HepG2 (cell line): ENCODE measurements at regions of chr7 and their contacts with region 1.

Region 1: DNA sequence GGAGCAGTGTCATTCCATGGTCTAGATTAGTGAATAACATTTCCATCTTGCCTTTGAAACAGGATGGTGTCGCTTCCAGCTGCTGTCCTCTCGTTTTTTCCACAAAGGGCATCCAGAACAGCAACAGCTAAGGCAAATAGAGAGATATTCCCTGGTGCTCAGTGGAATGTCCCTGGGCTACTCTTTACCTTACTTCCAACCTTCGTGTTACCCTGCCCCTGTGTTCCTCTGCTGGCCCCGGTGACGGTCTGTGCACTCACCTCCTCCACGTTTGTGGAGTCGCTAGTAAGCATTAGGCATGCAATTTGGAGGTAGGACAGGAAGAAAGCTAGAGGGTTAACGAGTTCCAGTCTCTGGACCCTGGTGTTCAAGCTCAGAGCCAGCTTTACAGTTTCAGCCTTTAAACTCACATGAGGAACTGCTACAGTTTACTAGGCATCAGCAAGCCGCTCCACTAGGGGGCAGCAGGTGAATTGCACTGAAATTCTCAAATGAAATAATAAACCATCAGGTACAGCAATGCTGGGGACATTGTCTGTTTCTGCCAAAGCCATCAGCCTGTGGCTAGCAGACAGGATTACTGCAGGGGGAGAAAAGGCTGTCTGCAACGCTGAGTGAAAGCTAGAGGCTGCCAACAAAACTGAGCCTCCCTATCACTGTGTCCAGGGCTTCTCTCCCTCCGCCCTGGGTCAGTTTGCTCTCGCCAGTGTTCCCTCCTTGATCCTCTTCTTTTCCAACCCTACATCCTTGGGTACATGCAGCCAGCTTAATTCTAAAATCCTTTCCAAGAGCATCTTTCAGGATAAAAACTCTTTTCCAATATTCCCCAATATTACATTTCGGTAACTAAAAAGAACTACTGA is 9.0 kb downstream of the MRPL32 start:
- DNase-seq: peak; percentile 56
- ATAC-seq: peak; percentile 93
- H3K4me3 ChIP-seq: no peak overlapping the region
- H3K27ac ChIP-seq: no peak overlapping the region
- H3K4me1 ChIP-seq: no peaks in the 10 kb centered on the region
- H3K27me3 ChIP-seq: no peaks in the 10 kb centered on the region
- CTCF ChIP-seq: peak; percentile 88
- EP300 ChIP-seq: no peak
- POLR2A ChIP-seq: no peak
- RAD21 ChIP-seq: peak; percentile 60; the same call in 1 of the 2 replicates

Region 2: DNA sequence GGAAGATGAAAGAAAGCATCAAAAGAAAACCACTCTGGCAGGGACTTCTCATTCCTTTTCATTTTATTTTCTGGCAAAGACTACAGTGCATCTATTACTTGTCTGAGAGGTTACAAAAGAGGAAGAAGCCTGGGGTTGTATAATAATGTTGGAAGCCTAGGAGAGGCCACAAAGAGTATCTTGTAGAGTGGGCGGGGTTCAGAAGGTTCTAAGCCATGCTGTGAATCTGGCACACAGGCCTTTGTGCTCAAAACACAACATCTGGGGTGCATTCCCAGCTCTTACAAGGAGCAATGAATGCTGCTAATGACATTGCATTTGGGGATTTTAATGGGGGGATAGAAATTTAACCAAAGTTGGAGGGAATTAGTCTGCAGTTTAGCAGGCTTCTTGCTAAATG is 40.4 kb after region 1 on chr7:
- CTCF ChIA-PET with region 1: no interaction called
- POLR2A ChIA-PET with region 1: no interaction called
- in situ Hi-C with region 1: no loop called
- intact Hi-C with region 1: no loop called
- DNase-seq: no peak
- ATAC-seq: no peak
- H3K4me3 ChIP-seq: no peak overlapping the region
- H3K27ac ChIP-seq: no peak overlapping the region
- H3K4me1 ChIP-seq: peaks cover 22% of the 10 kb centered on the region
- H3K27me3 ChIP-seq: no peaks in the 10 kb centered on the region
- CTCF ChIP-seq: no peak
- EP300 ChIP-seq: no peak
- POLR2A ChIP-seq: no peak
- RAD21 ChIP-seq: no peak

Region 3: DNA sequence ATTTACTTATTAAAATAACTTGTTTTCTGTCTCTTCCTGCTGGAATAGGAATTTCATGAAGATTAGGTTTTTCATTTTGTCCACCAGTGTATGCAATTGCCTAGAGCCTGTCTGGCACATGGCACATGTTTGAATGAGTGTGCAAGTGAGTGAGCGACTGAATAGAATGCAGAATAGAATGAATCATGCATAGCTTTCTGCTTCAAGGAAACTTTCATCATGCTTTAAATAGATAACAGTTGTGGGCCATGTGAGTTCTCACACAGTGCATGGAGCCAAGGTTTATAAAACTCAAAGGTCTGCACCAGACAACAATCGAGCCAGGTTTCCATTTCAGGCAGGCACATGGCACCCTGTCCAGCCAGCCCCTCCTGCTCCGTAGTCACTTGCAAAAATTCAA is 97.0 kb after region 1 on chr7:
- CTCF ChIA-PET with region 1: no interaction called
- POLR2A ChIA-PET with region 1: no interaction called
- in situ Hi-C with region 1: no loop called
- intact Hi-C with region 1: no loop called
- DNase-seq: no peak
- ATAC-seq: no peak
- H3K4me3 ChIP-seq: no peak overlapping the region
- H3K27ac ChIP-seq: no peak overlapping the region
- H3K4me1 ChIP-seq: no peaks in the 10 kb centered on the region
- H3K27me3 ChIP-seq: 0 out of 5 replicates have a peak, but pooled peaks cover 0 to 1% of the 10 kb centered on the region in 2 experiments
- CTCF ChIP-seq: no peak
- EP300 ChIP-seq: no peak
- POLR2A ChIP-seq: no peak
- RAD21 ChIP-seq: no peak

Region 4: GRCh38 chr7:43108255-43109011 is 167.2 kb after region 1 on chr7:
- CTCF ChIA-PET with region 1: interaction called, 8 read pairs
- POLR2A ChIA-PET with region 1: no interaction called
- in situ Hi-C with region 1: loop called (anchors 10 kb)
- intact Hi-C with region 1: loop called (anchors 1 kb)
- DNase-seq: peak; percentile 45
- ATAC-seq: peak; percentile 99
- H3K4me3 ChIP-seq: no peak overlapping the region
- H3K27ac ChIP-seq: no peak overlapping the region
- H3K4me1 ChIP-seq: no peaks in the 10 kb centered on the region
- H3K27me3 ChIP-seq: peaks cover 1 to 28% of the 10 kb centered on the region in 2 experiments; a peak in 3 of 5 replicates
- CTCF ChIP-seq: peak; percentile 72
- EP300 ChIP-seq: no peak
- POLR2A ChIP-seq: no peak
- RAD21 ChIP-seq: peak; percentile 33; the same call in 1 of the 2 replicates

Region 5: DNA sequence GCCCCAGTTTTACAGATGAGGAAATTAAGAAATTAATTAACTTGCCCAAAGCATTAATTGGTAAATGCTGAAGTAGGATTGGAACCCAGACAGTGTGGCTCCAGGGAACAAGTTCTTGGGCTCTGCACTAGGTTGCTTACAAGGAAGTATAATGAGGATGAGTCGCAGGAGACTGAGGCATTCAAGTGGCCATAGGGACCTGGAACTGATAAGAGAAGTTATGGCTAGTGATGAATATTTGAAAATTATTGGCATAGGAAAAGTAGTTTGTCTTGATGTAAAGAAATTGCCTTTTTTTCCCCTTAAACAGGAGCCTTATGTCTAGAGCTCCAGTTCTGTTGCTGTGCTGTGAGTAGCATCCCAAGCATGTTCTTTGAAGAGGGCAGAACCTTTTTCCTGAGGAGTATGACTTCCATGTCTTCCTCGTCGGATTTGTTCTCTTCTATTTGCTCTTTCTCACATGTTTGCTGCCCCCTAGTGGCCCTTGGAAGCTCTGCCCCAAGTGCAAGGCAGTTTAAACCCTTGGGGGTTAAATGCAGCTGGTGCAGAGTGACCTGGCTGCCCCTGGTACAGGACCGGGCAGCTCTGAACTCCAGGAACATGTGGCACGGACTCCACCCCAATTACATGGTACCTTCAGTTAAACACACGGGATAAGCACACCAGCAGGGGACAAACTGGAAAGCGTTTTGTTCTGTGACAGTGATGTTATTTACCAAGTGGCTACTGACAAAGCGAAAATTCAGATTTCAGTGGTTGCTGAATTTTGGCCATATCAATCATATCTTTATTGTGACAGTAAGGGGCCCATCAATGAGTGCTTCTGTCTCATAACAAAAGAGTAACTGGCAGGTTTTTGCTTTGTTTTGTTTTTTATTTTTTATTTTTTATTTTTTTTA is 320.0 kb after region 1 on chr7:
- CTCF ChIA-PET with region 1: interaction called, 13 read pairs
- POLR2A ChIA-PET with region 1: no interaction called
- in situ Hi-C with region 1: loop called (anchors 10 kb)
- intact Hi-C with region 1: loop called (anchors 1 kb)
- DNase-seq: peak; percentile 72
- ATAC-seq: peak; percentile 94
- H3K4me3 ChIP-seq: no peak overlapping the region
- H3K27ac ChIP-seq: no peak overlapping the region
- H3K4me1 ChIP-seq: no peaks in the 10 kb centered on the region
- H3K27me3 ChIP-seq: peaks cover 0 to 1% of the 10 kb centered on the region in 2 experiments; a peak in 1 of 5 replicates
- CTCF ChIP-seq: peak; percentile 83
- EP300 ChIP-seq: no peak
- POLR2A ChIP-seq: no peak
- RAD21 ChIP-seq: peak; percentile 61; the same call in 1 of the 2 replicates

Region 6: DNA sequence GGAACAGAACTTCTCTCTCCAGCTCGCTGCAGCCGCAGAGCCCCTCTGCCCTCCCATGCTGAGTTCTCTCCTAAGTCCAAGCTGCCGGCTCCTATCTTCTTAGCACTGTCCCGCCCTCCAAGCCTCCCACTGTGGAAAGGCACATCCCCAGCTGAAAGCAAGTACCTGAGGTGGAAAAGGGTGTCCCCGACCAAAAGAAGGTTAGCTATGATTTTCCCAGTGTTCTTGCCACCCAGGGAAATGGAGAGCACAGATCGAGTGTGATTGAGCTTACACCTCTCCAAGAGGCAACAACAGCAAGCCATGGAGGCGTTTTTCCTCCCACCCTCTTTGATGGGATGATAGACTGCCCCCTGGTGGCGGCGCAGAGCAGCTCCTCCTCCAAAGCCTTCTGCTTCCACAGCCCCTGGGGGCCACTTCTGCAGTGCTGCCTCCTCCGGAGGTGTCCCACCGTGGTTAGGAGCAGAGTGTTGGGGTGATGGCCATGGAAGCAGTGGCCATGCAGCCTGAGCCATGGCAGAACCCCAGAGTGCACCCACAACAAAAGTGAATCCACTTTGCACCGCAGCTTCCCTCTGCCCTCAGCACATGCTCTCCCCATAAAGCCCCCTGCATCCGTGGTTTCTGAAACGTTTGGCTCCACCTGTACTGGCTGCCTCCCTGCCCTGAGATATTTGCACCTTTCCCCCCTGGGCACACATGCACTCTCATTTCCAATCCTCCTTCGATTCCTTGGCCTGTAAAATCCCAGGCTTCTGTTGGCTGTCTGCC is 498.6 kb after region 1 on chr7:
- CTCF ChIA-PET with region 1: interaction called, 10 read pairs
- POLR2A ChIA-PET with region 1: no interaction called
- in situ Hi-C with region 1: loop called (anchors 10 kb)
- intact Hi-C with region 1: no loop called
- DNase-seq: peak; percentile 51
- ATAC-seq: peak; percentile 95
- H3K4me3 ChIP-seq: peak overlapping the region in 1 of 3 experiments; percentile 51; a peak in 2 of 6 replicates
- H3K27ac ChIP-seq: no peak overlapping the region
- H3K4me1 ChIP-seq: peaks cover 31% of the 10 kb centered on the region
- H3K27me3 ChIP-seq: no peaks in the 10 kb centered on the region
- CTCF ChIP-seq: peak; percentile 87
- EP300 ChIP-seq: no peak
- POLR2A ChIP-seq: no peak
- RAD21 ChIP-seq: peak; percentile 56